ENCODE measurements at regions of chr1 and their contacts with region 1.

Region 1: DNA sequence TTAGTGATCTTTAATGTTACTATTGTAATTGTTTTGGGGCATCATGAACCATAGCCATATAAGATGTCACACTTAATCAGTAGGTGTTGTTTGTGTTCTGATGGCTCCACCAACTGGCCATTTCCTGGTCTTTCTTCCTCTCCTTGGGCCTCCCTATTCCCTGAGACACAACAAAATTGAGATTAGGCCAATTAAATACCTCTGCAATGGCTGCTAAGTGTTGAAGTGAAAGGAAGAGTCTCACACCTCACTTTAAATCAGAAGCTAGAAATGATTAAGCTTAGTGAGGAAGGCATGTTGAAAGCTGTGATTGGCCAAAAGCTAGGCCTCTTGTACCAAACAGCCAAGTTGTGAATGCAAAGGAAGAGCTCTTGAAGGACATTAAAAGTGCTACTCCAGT is 30.7 kb downstream of the PPP2R5A start:
- DNase-seq: peak in 1 of 2 donors; percentile 46
- ATAC-seq: peak; percentile 62 to 69 (median 69)
- H3K4me3 ChIP-seq: no peak overlapping the region
- H3K4me3 Mint-ChIP-seq: no peak overlapping the region
- H3K27ac ChIP-seq: no peak overlapping the region
- H3K27ac Mint-ChIP-seq: peak overlapping the region; percentile 80 to 87
- H3K4me1 ChIP-seq: peaks cover 4% of the 10 kb centered on the region
- H3K4me1 Mint-ChIP-seq: peaks cover 54 to 55% of the 10 kb centered on the region in 2 donors
- H3K27me3 ChIP-seq: no peaks in the 10 kb centered on the region
- H3K27me3 Mint-ChIP-seq: no peaks in the 10 kb centered on the region
- CTCF ChIP-seq: no peak

Region 2: GRCh38 chr1:212062832-212063438 is 253.0 kb before region 1 on chr1:
- intact Hi-C with region 1: loop called (anchors 2 kb)
- DNase-seq: peak in 1 of 2 donors; percentile 62
- ATAC-seq: peak in 2 of 3 donors; percentile 60 to 67
- H3K4me3 ChIP-seq: no peak overlapping the region
- H3K4me3 Mint-ChIP-seq: no peak overlapping the region
- H3K27ac ChIP-seq: no peak overlapping the region
- H3K27ac Mint-ChIP-seq: no peak overlapping the region
- H3K4me1 ChIP-seq: no peaks in the 10 kb centered on the region
- H3K4me1 Mint-ChIP-seq: no peaks in the 10 kb centered on the region
- H3K27me3 ChIP-seq: no peaks in the 10 kb centered on the region
- H3K27me3 Mint-ChIP-seq: no peaks in the 10 kb centered on the region
- CTCF ChIP-seq: peak; percentile 90

Measured in natural killer cell (primary cell).